Heart left ventricle (tissue), 16 donors: ENCODE measurements at regions of chr9 and their contacts with region 1.

Region 1: DNA sequence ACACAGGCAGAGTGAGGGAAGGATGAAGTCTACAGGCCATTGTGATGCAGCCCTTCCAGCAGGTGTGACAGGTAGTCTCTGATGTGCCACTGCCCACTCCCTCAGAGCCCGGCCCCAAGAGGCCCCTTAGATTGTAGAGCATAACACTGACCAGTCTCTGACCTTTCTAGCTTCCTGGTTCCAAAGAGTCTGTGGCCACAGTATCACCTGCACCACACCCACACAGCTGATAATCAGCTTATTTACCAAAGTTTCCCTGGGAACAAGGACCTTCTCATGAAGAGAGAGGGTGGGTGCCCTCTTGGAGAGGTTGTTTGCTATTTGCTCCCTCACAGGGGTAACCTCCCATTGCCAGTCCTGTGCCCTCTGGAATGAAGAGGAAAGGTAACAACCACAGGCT is 11.0 kb upstream of the ACER2 start:
- DNase-seq: no peak
- ATAC-seq: no peak
- H3K4me3 ChIP-seq: no peak overlapping the region
- H3K27ac ChIP-seq: no peak overlapping the region
- H3K4me1 ChIP-seq: no peaks in the 10 kb centered on the region
- H3K27me3 ChIP-seq: no peaks in the 10 kb centered on the region
- CTCF ChIP-seq: no peak
- POLR2A ChIP-seq: no peak

Region 2: DNA sequence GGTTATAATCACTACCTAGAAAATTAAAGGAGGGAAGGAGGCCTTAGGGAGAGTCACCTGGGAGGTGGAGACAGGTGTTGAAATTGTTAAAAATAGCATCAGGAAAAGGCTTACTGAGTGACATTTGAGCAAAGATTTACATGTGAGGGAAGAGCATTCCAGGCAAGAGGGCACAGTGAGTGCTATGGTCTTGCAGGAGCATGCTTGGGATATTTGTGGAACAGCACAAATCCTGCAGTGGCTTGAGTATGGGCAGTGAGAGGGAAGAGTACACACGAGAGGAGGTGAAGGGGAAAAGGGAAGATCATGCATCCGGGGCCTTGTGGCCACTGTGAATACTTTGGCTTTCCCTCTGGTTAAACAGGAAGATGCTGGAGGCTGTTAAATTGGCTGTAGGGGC is 47.6 kb after region 1 on chr9:
- intact Hi-C with region 1: loop called in 1 of 10 experiments (anchors 5 kb)
- DNase-seq: no peak
- ATAC-seq: no peak
- H3K4me3 ChIP-seq: no peak overlapping the region
- H3K27ac ChIP-seq: no peak overlapping the region
- H3K4me1 ChIP-seq: peaks cover 0 to 18% (median 0%) of the 10 kb centered on the region in 12 donors
- H3K27me3 ChIP-seq: no peaks in the 10 kb centered on the region
- CTCF ChIP-seq: no peak
- POLR2A ChIP-seq: no peak